ENCODE measurements at regions of chr7 and their contacts with region 1.

Region 1: DNA sequence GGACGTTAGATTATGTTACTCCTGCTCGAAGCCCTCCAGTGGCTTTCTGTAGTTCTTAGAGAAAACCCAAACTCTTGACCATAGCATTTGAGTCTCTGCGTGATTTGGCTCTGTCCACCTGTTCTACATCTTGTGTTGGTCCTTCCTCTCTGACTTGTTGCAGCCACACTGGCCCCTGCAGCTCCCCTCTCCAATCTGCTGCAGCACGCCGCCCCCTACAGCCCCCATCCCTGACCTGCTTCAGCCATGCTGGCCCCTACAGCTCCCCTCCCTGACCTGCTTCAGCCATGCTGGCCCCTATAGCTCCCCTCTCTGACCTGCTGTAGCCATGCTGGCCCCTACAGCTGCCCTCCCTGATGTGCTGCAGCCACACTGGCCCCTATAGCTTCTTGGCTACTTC is 29.2 kb downstream of the TRRAP start:
- DNase-seq: no peak
- ATAC-seq: no peak
- H3K4me3 ChIP-seq: no peak overlapping the region
- H3K27ac ChIP-seq: no peak overlapping the region
- H3K4me1 ChIP-seq: no peaks in the 10 kb centered on the region
- H3K27me3 ChIP-seq: no peaks in the 10 kb centered on the region
- CTCF ChIP-seq: no peak

Region 2: GRCh38 chr7:98949336-98950044 is 41.9 kb after region 1 on chr7:
- intact Hi-C with region 1: no loop called
- DNase-seq: peak; percentile 29 to 67
- ATAC-seq: peak; percentile 43 to 65 (median 56)
- H3K4me3 ChIP-seq: no peak overlapping the region
- H3K27ac ChIP-seq: no peak overlapping the region
- H3K4me1 ChIP-seq: no peaks in the 10 kb centered on the region
- H3K27me3 ChIP-seq: no peaks in the 10 kb centered on the region
- CTCF ChIP-seq: no peak

Region 3: DNA sequence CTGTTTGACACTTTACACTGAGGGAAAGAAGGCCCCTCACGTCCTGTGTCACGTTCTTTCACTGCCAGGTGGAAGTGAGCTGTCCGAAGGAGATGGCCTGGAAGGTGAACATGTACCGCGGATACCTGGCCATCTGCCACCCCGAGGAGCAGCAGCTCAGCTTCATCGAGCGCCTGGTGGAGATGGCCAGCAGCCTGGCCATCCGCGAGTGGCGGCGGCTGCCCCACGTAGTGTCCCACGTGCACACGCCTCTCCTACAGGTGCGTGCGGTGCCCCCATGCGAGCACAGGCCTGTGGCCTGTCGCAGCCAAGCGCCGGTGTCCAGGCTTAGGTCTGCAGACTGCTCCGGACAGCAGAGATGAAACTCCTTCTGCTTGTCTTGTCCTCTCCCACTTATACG is 74.1 kb after region 1 on chr7:
- intact Hi-C with region 1: loop called in 1 of 2 experiments (anchors 5 kb)
- DNase-seq: no peak
- ATAC-seq: no peak
- H3K4me3 ChIP-seq: no peak overlapping the region
- H3K27ac ChIP-seq: no peak overlapping the region
- H3K4me1 ChIP-seq: no peaks in the 10 kb centered on the region
- H3K27me3 ChIP-seq: no peaks in the 10 kb centered on the region
- CTCF ChIP-seq: no peak

Measured in psoas muscle (tissue), 8 donors.